ENCODE measurements at regions of chr1 and their contacts with region 1.

Region 1: DNA sequence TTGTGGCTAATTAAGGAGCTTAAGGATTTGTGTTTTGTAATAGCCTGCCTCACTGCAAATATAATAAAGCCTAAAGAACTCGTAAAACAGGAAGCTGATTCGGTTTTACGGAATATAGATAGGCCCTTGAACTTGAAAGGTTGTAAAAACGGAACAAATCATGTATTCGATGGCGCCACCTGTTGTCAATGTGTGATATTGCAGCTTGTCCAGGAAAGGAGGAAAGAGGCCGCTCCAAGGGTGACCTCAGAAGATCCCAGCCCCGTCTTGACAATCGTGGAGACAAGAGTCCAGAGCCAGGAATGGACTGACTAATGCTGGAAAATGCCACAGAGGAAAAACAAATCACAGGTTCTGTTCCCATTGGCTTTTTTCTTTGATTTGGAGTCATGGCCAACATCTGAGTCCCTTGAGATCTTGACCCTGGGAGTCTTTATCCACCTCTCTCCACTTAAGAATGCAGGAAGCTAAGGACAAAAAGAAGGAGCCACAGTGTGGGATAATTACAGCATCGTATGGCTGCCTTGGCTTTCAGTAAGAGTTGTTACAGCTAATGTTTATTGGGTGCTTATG is 7.0 kb upstream of the IGSF21 start:
- DNase-seq: peak; percentile 81 to 85
- H3K4me3 ChIP-seq: no peak overlapping the region
- H3K27ac ChIP-seq: no peak overlapping the region
- H3K4me1 ChIP-seq: peaks cover 0 to 4% (median 0%) of the 10 kb centered on the region in 4 donors
- H3K27me3 ChIP-seq: peaks cover 0 to 43% of the 10 kb centered on the region in 2 donors
- CTCF ChIP-seq: peak; percentile 76 to 81

Region 2: DNA sequence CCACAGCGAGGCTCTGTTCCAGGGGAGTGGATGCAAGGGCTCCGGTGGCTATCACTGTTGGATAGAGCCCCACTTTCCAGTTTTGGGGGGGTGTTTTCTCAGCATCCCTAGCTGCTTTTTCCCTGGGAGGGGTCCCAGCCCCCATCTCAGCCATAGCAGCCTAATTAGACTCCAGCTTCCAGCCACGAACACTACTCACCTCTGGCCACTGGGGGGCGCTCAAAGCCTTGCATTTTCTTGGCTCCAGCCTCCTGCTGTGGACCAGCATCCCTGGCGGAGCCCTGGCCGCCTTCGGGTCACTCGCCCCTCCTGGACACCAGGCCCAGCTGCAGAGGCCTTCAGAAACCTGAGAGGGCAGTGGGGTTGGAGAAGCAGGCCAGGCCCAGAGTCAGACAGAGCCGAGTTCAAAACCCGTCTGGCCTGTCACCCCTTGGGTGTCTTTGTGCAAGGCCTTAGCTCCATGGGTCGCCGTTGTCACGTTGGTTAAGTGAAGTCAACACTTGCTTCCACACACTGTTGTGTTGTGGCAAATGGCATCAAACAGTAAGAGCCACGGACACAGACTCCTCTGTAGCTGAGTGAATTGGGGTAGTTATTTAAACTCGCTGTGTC is 438.9 kb before region 1 on chr1:
- intact Hi-C with region 1: loop called (anchors 5 kb)
- DNase-seq: peak in 1 of 2 donors; percentile 80
- H3K4me3 ChIP-seq: no peak overlapping the region
- H3K27ac ChIP-seq: no peak overlapping the region
- H3K4me1 ChIP-seq: peaks cover 0 to 5% (median 2%) of the 10 kb centered on the region in 4 donors
- H3K27me3 ChIP-seq: no peaks in the 10 kb centered on the region
- CTCF ChIP-seq: peak; percentile 77 to 80

Region 3: GRCh38 chr1:17878837-17879236 is 221.7 kb before region 1 on chr1:
- intact Hi-C with region 1: no loop called
- DNase-seq: no peak
- H3K4me3 ChIP-seq: no peak overlapping the region
- H3K27ac ChIP-seq: no peak overlapping the region
- H3K4me1 ChIP-seq: peaks cover 0 to 17% (median 0%) of the 10 kb centered on the region in 4 donors
- H3K27me3 ChIP-seq: peaks cover 0 to 27% of the 10 kb centered on the region in 2 donors
- CTCF ChIP-seq: no peak

Measured in tibial artery (tissue), 4 donors.